Dorsolateral prefrontal cortex (tissue), 120 donors: ENCODE measurements at regions of chr1 and their contacts with region 1.

Region 1: DNA sequence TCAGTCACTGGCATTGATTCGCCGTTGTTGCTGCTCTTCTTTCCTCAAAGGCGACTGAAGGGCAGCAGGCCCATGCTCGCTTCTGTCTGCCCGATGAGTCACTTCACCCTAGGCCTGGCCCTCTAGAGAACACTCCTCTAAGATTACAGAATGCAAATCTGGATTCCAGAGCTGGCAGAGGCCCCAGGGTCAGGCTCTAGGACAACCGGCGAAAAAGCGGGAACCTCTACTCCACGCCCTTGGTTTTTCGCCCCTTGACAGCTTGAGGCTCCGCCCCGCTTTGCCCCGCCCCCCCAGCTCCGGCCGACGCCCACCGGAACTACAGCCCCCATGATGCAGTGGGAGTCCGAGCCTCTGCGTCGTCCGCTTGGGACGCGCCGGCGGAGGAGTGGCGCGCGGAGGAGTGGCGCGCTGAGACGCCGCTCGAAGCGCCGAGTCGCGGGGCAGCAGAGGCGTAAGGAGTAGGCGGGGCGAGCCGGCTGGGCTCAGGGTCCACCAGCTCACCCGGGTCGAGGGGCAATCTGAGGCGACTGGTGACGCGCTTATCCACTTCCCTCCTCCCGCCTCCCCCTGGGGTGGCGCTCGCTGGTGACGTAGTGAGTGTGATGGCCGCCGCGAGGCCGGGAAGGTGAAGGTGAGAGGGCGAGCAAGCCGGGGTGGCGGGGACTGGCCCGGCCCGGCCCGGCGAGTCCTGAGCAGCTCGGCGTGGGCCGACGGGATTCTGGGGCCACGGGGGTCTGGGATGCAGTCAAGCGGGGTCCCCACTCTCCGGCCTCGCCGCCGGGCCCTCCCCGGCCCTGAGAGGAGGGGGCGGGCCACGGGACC is at the start of gene MFN2:
- DNase-seq: peak; percentile 85 to 95 (median 94)
- H3K4me3 ChIP-seq: peak within 1 kb of the TSS; percentile 57 to 100 (median 94)
- H3K27ac ChIP-seq: peak within 1 kb of the TSS; percentile 53 to 98 (median 94)
- H3K27me3 ChIP-seq: no peaks in the 10 kb centered on the region
- CTCF ChIP-seq: peak in 29 of 56 donors; percentile 7 to 60 (median 23)
- total RNA-seq, gene MFN2: 107 to 182 (median 141) TPM

Region 2: GRCh38 chr1:11611638-11612327 is 368.3 kb before region 1 on chr1:
- intact Hi-C with region 1: no loop called
- DNase-seq: no peak
- H3K4me3 ChIP-seq: no peak overlapping the region
- H3K27ac ChIP-seq: no peak overlapping the region
- H3K27me3 ChIP-seq: peaks cover 0 to 3% (median 0%) of the 10 kb centered on the region in 45 donors
- CTCF ChIP-seq: no peak

Region 3: GRCh38 chr1:11838349-11839272 is 141.5 kb before region 1 on chr1:
- intact Hi-C with region 1: loop called in 1 of 2 experiments (anchors 5 kb)
- DNase-seq: peak; percentile 65 to 89 (median 76)
- H3K4me3 ChIP-seq: peak overlapping the region in 1 of 59 donors; percentile 18
- H3K27ac ChIP-seq: peak overlapping the region in 7 of 59 donors; percentile 3 to 38 (median 28)
- H3K27me3 ChIP-seq: no peaks in the 10 kb centered on the region
- CTCF ChIP-seq: peak; percentile 84 to 100 (median 97)

Region 4: DNA sequence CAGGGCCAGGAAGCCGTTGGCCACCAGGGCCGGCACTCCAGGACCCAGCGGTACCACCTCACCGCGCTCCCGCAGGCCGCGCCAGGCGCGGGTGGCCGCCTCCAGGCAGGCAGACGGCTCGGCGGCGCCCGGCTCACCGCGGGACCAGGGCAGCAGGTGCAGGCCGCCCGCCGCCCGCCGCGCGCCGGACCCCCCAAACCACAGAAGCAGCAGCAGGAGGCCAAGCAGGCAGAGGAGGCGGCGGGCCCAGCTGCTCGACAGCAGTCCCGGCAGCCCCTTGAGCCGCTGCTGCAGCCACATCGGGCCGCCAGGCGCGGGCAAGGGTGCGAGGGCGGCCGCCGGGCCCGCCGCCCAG is 54.1 kb before region 1 on chr1:
- intact Hi-C with region 1: loop called in 1 of 2 experiments (anchors 5 kb)
- DNase-seq: no peak
- H3K4me3 ChIP-seq: peak overlapping the region; percentile 38 to 84 (median 63)
- H3K27ac ChIP-seq: peak overlapping the region in 12 of 59 donors; percentile 18 to 80 (median 62)
- H3K27me3 ChIP-seq: no peaks in the 10 kb centered on the region
- CTCF ChIP-seq: no peak

Region 5: DNA sequence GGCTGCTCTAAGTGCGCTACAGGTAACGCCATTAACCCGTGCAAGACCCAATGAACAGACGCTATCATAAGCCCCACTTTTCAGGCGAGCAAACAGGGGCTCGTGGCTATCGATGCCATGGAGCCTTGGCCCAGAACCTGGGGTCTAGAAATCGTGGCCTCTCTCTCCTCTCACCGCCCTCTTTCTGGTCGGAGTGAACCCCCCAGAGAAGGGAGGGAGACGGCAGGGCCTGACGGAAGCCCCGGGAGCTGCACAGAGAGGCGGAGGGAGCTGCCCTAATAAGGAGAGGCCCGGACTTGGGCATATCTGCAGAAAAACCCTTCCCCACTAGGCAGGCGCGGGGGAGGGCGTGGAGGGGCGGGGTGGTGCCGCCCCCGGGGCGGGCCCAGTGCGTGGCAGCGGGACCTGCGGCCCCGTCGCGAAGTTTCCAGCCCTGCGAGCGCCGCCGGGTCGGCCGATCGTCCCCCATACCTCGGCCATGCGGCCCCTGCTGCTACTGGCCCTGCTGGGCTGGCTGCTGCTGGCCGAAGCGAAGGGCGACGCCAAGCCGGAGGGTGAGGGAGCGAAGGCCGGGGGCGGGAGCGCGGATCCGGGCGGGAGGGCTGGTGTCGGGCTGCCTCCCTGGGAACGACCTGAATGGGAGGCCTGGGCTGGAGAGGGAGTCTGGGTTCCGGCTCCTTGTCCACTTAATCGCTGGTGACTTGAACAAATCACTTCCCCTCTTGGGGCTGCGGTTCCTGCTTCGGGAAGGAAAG is 45.6 kb before region 1 on chr1 and contains the start of gene PLOD1:
- intact Hi-C with region 1: loop called in 1 of 2 experiments (anchors 5 kb)
- DNase-seq: peak; percentile 62 to 90 (median 80)
- H3K4me3 ChIP-seq: peak within 1 kb of the TSS; percentile 49 to 97 (median 78)
- H3K27ac ChIP-seq: peak within 1 kb of the TSS; percentile 65 to 97 (median 91)
- H3K27me3 ChIP-seq: no peaks in the 10 kb centered on the region
- CTCF ChIP-seq: peak in 9 of 56 donors; percentile 6 to 42 (median 22)
- total RNA-seq, gene PLOD1: 28.5 to 148 (median 43.7) TPM

Region 6: GRCh38 chr1:11940260-11940921 is 39.7 kb before region 1 on chr1:
- intact Hi-C with region 1: loop called (anchors 1 to 5 kb)
- DNase-seq: peak in 9 of 10 donors; percentile 9 to 80 (median 68)
- H3K4me3 ChIP-seq: no peak overlapping the region
- H3K27ac ChIP-seq: peak overlapping the region in 50 of 59 donors; percentile 3 to 95 (median 65)
- H3K27me3 ChIP-seq: no peaks in the 10 kb centered on the region
- CTCF ChIP-seq: peak in 5 of 56 donors; percentile 4 to 22 (median 15)

Region 7: DNA sequence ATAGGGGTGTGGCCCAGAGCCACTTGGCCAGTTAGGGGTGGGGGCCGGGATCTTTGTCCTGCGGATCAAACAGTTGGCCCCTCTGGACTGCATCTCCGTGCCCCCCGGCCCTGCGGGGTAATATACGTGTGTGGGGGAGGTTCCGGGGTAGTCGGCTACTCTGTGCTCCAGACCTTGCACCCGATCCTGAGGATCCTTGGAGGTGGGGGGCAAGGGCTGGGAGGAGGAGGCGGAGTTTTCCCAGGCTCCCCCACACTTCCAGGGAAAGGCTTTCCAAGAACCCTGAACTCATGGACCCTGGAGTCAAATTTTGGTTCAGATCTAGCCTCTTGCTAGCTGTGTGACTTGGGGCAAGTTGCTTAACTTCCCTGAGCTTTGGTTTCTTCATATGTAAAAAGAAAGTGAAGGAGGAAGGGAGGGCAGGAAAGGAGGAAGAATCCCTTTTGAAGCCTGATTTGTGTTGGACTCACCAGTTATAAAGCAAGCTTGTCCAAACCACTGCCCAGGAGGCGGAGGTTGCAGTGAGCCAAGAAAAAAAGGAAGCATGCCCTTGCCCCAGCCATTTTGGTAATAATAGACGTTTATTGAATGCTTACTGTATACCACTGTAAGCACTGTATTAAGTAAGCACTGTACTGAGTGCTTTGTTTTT is 39.9 kb after region 1 on chr1:
- intact Hi-C with region 1: loop called (anchors 2 kb)
- DNase-seq: peak in 1 of 10 donors; percentile 52
- H3K4me3 ChIP-seq: peak overlapping the region; percentile 59 to 100 (median 93)
- H3K27ac ChIP-seq: peak overlapping the region in 53 of 59 donors; percentile 4 to 92 (median 74)
- H3K27me3 ChIP-seq: no peaks in the 10 kb centered on the region
- CTCF ChIP-seq: no peak